HEK293 (cell line): ENCODE measurements at regions of chr1 and their contacts with region 1.

Region 1: DNA sequence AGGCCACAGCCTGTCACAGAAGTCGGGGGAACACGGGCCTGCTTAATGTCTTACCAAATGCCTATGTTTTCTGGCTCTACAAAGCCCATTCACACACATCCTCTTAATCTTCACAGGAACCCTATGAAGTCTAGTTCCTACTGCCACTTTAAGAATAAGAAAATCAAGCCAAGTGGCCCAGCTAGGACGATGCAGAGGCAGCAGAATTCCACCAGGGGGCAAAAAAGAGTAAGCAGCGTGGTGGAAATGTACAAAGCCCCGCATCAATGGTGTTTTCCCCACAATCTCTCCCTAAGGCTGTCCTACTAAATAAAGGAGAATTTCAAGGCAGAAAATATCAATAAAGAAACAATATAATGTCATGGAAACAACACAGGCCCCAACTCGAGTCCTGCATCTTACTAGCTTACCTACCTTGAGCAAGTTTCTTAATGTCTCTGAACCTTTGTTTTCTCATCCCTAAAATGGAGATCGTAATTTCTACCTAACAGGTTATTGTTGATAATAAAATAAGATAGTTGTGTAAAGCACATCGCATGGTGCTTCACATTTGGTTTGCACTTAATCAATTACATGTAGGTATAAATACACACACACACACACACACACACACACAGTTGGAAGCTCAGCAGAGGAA is 21.4 kb downstream of the SEC16B start:
- H3K4me3 ChIP-seq: no peak overlapping the region
- H3K27ac ChIP-seq: no peak overlapping the region
- H3K4me1 ChIP-seq: no peaks in the 10 kb centered on the region
- CTCF ChIP-seq: peak; percentile 66

Region 2: GRCh38 chr1:177937931-177938330 is 10.5 kb before region 1 on chr1:
- CTCF ChIA-PET with region 1: interaction called, 24 read pairs
- POLR2A ChIA-PET with region 1: no interaction called
- H3K4me3 ChIP-seq: no peak overlapping the region
- H3K27ac ChIP-seq: no peak overlapping the region
- H3K4me1 ChIP-seq: no peaks in the 10 kb centered on the region
- CTCF ChIP-seq: no peak

Region 3: GRCh38 chr1:177995368-177995767 is 46.9 kb after region 1 on chr1:
- CTCF ChIA-PET with region 1: no interaction called
- POLR2A ChIA-PET with region 1: no interaction called
- H3K4me3 ChIP-seq: no peak overlapping the region
- H3K27ac ChIP-seq: no peak overlapping the region
- H3K4me1 ChIP-seq: no peaks in the 10 kb centered on the region
- CTCF ChIP-seq: no peak

Region 4: GRCh38 chr1:178282949-178283367 is 334.5 kb after region 1 on chr1:
- CTCF ChIA-PET with region 1: interaction called, 12 read pairs
- POLR2A ChIA-PET with region 1: no interaction called
- H3K4me3 ChIP-seq: no peak overlapping the region
- H3K27ac ChIP-seq: no peak overlapping the region
- H3K4me1 ChIP-seq: no peaks in the 10 kb centered on the region
- CTCF ChIP-seq: no peak